AG04449 (cell line): ENCODE measurements at regions of chr11 and their contacts with region 1.

Region 1: GRCh38 chr11:107549253-107549953 is 16.1 kb downstream of the ALKBH8 start:
- DNase-seq: no peak
- H3K4me3 ChIP-seq: no peak overlapping the region
- CTCF ChIP-seq: peak; percentile 70

Region 2: DNA sequence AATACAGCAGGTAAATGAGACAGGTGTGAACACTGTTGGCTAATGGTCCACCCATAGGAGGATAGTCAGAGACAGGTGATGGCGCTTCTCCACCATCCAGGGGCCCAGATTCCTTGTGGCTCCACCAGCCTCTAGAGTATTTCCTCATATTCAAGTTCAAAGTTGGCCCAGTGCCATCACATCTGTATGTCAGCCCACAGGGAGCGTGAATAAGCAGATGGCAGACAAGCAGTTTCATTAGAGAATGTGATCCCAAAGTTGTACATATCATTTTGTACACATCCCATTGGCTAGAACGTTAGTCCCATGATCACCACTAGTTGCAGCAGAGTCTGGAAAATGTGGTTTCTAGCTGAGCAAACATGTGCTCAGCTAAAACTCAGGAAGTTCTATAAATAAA is 80.8 kb before region 1 on chr11:
- CTCF ChIA-PET with region 1: no interaction called
- POLR2A ChIA-PET with region 1: no interaction called
- DNase-seq: no peak
- H3K4me3 ChIP-seq: no peak overlapping the region
- CTCF ChIP-seq: no peak

Region 3: GRCh38 chr11:107538821-107539220 is 10.6 kb before region 1 on chr11:
- CTCF ChIA-PET with region 1: interaction called, 36 read pairs
- POLR2A ChIA-PET with region 1: no interaction called
- DNase-seq: no peak
- H3K4me3 ChIP-seq: no peak overlapping the region
- CTCF ChIP-seq: no peak

Region 4: DNA sequence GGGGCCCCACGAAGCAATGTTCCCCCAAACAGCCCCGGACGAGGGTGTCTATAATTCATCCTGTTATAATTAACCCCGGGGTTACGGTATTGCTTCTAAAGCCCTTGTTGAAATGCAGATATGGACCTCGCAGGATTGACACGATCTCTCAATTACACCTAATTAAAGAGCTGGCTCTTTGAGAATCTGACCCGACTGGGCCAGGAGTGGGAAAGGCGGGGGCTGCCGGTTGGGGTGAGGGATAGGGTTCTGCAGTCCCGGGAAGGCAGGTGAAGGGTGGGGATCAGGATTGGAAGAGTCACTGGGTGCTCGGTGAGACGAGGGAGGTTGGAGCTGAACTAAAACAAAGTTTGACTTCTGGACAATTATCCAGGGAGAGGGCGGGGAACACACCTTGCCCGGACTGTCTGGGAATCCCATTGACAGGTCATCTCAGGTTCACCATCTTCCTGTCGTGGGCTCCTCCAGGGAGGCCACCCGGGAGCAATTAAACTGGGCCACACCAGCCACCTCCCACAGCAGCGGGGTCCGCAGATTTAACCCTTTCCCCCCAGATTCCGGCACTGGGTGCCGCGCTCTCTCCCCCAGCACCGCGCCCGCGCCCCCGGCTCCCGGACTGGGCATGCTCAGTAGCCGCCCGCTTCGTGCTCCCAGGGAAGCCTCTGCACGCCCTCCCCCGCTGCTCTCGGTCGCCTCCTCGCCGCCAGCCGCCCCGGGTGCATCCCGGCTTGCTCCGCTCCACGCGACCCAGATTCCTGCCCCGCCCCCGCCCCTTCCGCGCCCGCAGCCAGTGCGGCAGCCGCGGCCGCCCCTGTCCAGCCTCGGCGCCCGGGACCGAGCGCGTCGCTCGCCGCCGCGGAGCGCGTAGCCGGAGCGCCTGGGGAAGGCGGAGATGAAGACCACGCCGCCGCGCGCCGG is 41.3 kb after region 1 on chr11 and contains the start of gene ELMOD1:
- CTCF ChIA-PET with region 1: no interaction called
- POLR2A ChIA-PET with region 1: no interaction called
- DNase-seq: no peak
- H3K4me3 ChIP-seq: peak within 1 kb of the TSS; percentile 66
- CTCF ChIP-seq: peak; percentile 30